Activated CD4-positive, alpha-beta T cell treated with anti-CD3 and anti-CD28 coated beads for 36 hours (primary cell): ENCODE measurements at regions of chr1 and their contacts with region 1.

Region 1: GRCh38 chr1:192573499-192573898 is 2.1 kb upstream of the RGS1 start:
- DNase-seq: no peak
- ATAC-seq: no peak
- H3K4me3 Mint-ChIP-seq: no peak overlapping the region
- H3K27ac Mint-ChIP-seq: no peak overlapping the region
- H3K4me1 Mint-ChIP-seq: peaks cover 66% of the 10 kb centered on the region
- H3K27me3 Mint-ChIP-seq: no peaks in the 10 kb centered on the region

Region 2: DNA sequence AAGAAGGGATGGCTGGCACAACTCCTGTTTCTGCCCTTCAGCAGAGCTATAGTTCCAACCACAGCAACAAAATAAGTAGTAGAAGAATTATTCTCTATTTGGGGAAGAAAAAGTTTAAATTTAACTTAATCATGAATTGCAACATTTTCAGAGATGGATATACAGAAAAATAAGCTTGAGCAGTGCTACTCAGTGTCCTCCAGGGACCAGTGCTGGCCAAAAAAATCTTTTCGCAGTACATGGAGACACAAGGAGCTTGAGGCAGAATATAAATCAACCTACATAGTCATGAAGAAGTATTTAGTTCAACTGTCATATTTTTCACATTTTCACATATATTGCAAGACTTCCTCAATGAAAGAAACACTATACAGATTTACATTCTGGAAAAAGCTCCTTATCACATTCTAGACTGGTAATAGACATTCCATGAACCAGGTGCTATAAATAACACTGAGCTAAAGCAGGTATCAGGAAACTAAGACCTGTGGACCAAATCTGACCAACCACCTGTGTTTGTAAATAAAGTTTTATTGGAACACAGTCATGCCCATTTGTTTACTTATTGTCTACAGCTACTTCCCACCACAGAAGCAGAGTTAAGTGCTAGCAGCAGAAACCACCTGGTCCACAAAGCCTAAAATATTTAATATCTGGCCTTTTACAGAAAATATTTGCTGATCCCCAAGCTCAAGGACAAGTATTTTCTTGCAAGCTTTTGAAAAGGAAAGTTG is 154.8 kb before region 1 on chr1:
- CTCF ChIA-PET with region 1: no interaction called
- POLR2A ChIA-PET with region 1: no interaction called
- intact Hi-C with region 1: no loop called
- DNase-seq: no peak
- ATAC-seq: no peak
- H3K4me3 Mint-ChIP-seq: no peak overlapping the region
- H3K27ac Mint-ChIP-seq: no peak overlapping the region
- H3K4me1 Mint-ChIP-seq: no peaks in the 10 kb centered on the region
- H3K27me3 Mint-ChIP-seq: peaks cover 5% of the 10 kb centered on the region

Region 3: DNA sequence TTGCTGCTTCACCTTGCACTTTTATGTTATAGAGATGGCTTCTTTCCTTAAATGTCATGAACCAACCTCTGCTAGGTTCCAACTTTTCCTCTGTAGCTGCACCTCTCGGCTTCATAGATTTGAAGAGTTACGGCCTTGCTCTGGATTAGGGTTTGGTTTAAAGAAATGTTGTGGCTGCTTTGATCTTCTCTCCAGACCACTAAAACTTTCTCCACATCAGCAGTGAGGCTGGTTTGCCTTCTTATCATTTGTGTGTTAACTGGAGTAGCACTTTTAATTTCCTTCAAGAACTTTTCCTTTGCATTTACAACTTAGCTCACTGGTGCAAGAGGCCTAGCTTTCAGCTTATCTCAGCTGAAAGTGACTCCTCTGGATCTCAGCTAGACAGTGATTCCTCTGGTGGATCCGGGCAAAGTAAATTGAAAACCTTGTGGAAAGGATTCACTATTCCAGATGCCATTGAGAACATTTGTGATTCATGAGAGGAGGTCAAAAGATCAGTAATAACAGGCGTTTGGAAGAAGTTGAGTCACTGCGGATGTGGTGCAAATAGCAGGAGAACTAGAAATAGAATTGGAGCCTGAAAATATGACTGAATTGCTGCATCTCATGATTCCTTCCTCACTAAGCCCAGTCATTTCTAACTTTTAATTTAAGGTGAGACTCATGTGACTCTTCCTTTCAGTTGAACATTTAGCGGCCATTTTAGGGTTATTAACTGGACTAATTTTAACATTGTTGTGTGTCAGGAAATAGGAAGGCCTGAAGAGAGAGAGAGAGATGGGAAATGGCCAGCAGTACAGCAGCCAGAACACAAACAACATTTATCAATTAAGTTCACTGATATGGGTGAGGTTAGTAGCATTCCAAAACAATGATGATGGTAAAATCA is 14.1 kb before region 1 on chr1:
- CTCF ChIA-PET with region 1: interaction called, 5 read pairs
- POLR2A ChIA-PET with region 1: no interaction called
- intact Hi-C with region 1: loop called in 1 of 2 experiments (anchors 2 kb)
- DNase-seq: no peak
- ATAC-seq: peak; percentile 71
- H3K4me3 Mint-ChIP-seq: no peak overlapping the region
- H3K27ac Mint-ChIP-seq: peak overlapping the region; percentile 70
- H3K4me1 Mint-ChIP-seq: peaks cover 25% of the 10 kb centered on the region
- H3K27me3 Mint-ChIP-seq: no peaks in the 10 kb centered on the region